ENCODE measurements at regions of chr2 and their contacts with region 1.

Region 1: GRCh38 chr2:23055251-23055650 is 329.7 kb upstream of the KLHL29 start:
- DNase-seq: no peak
- H3K4me3 ChIP-seq: no peak overlapping the region
- H3K27ac ChIP-seq: no peak overlapping the region
- H3K4me1 ChIP-seq: no peaks in the 10 kb centered on the region
- H3K27me3 ChIP-seq: no peaks in the 10 kb centered on the region
- CTCF ChIP-seq: no peak
- POLR2A ChIP-seq: no peak

Region 2: GRCh38 chr2:24084386-24085361 is 1029.4 kb after region 1 on chr2 and contains the start of gene TP53I3:
- intact Hi-C with region 1: loop called (anchors 5 kb)
- DNase-seq: peak; percentile 83 to 87
- H3K4me3 ChIP-seq: peak within 1 kb of the TSS; percentile 58 to 71 (median 66)
- H3K27ac ChIP-seq: peak within 1 kb of the TSS; percentile 84 to 93
- H3K4me1 ChIP-seq: peaks cover 0 to 5% of the 10 kb centered on the region in 2 donors
- H3K27me3 ChIP-seq: no peaks in the 10 kb centered on the region
- CTCF ChIP-seq: peak; percentile 80 to 97 (median 95)
- POLR2A ChIP-seq: peak; percentile 45
- total RNA-seq, gene TP53I3: 19.2 to 24.3 (median 19.6) TPM

Measured in breast epithelium (tissue), 4 donors.